ENCODE measurements at regions of chr7 and their contacts with region 1.

Region 1: GRCh38 chr7:41624816-41625215 is 78.1 kb downstream of the INHBA start:
- DNase-seq: no peak
- H3K4me3 ChIP-seq: no peak overlapping the region
- H3K27ac ChIP-seq: no peak overlapping the region
- H3K4me1 ChIP-seq: no peaks in the 10 kb centered on the region
- H3K27me3 ChIP-seq: no peaks in the 10 kb centered on the region
- CTCF ChIP-seq: no peak
- EP300 ChIP-seq: no peak
- POLR2A ChIP-seq: no peak

Region 2: DNA sequence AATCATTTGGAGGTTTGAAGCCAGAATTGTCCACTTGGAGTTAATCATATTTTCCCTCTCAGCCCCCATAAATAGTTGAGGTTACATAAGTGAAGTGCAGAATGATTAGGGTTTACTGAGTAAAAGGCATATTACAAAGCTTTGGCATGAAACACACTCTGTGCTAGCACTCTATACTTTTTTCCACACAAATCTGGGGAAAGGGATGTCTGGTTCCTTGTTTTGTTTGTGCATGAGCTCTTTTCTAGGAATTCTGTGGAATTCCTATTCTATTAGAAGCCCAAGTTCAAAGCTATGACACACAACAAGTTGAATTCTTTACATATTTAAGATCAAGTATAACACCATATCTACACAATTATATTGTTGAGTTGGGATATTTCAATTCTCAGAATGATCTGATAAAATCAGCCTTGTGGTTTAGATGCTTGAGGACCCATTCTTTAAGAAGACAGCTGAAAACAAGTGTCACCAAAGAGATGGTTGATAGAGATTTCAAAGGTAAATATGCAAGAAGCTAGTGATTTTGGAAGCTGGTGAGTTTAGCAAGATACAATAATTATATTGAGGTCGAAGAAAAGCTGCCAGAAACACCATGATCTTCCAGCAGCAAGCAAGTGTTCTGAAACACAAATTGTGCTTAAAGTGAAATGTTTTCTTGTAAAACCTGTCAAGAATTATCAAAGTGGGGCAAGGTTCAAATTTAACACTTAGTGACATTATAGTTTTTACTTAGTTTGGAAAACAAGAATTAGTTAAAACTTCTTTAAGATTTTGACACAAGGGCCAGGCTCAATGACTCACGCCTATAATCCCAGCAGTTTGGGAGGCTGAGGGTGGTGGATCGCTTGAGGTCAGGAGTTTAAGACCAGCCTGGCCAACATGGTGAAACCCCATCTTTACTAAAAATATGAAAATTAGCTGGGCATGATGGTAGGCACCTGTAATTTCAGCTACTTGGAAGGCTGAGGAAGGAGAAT is 44.6 kb before region 1 on chr7:
- in situ Hi-C with region 1: no loop called
- intact Hi-C with region 1: no loop called
- DNase-seq: no peak
- H3K4me3 ChIP-seq: no peak overlapping the region
- H3K27ac ChIP-seq: no peak overlapping the region
- H3K4me1 ChIP-seq: no peaks in the 10 kb centered on the region
- H3K27me3 ChIP-seq: no peaks in the 10 kb centered on the region
- CTCF ChIP-seq: no peak
- EP300 ChIP-seq: no peak
- POLR2A ChIP-seq: no peak

Region 3: DNA sequence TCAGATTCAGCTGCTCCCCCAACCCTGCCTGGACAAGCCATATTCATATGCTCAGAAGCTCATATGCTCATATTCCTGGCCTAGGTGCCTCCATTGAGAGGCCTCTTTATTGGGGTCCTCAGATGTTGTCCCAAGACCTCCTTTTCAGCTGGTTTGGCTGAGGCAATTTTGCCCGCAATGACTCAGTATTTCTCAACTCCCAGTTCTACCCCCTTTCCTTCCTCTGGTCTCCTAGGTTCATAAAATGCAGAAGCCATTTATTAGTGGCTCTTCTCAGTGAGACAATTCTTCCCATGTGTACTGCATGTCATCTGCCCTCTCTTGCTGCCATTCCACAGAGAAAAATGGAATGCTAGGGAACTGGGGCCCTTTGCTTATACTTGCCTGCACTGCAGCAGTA is 32.6 kb before region 1 on chr7:
- in situ Hi-C with region 1: no loop called
- intact Hi-C with region 1: loop called (anchors 2 kb)
- DNase-seq: no peak
- H3K4me3 ChIP-seq: no peak overlapping the region
- H3K27ac ChIP-seq: no peak overlapping the region
- H3K4me1 ChIP-seq: no peaks in the 10 kb centered on the region
- H3K27me3 ChIP-seq: no peaks in the 10 kb centered on the region
- CTCF ChIP-seq: no peak
- EP300 ChIP-seq: no peak
- POLR2A ChIP-seq: no peak